ENCODE measurements at regions of chr3 and their contacts with region 1.

Region 1: GRCh38 chr3:149969940-149970715 is 567 bp downstream of the PFN2 start:
- DNase-seq: peak; percentile 72
- H3K4me3 ChIP-seq: peak overlapping the region; percentile 78
- H3K27ac ChIP-seq: peak overlapping the region; percentile 80
- H3K27me3 ChIP-seq: no peaks in the 10 kb centered on the region
- CTCF ChIP-seq: no peak

Region 2: DNA sequence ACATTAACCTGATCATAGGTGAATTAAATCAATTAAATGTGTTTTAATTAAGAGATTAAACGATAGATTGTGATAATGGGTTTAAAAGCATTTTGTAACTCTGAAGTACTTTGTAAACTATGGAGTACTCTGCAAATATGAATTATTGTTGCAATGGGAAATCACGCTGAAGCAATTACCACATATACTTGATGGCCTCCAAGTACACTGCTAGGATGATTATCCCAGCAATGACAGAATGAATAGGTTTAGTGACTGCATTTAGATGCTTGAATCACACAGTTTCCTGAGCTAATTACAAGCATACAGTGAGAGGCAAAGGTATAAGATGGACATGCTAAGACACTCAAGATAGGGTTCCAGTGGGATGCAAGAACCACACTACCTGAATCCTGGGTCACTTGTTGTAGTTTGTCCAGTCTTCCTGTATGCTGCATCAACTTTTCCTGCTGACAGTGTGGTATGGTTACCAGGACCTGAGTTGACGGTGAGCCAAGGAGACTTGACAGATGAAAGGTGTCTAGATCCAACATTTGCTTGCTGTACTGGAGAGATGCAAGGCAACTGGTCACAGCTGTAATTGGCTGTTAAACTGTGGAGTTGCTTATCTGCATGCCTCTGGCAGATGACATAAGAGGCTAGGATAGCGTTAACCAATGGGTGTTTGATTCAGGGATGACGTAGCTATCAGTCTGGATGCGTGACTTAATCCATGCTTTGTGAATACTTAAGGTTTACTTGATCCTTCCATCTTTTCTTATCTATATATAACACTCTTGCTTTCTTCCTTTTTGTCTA is 119.1 kb before region 1 on chr3:
- CTCF ChIA-PET with region 1: no interaction called
- POLR2A ChIA-PET with region 1: no interaction called
- DNase-seq: no peak
- H3K4me3 ChIP-seq: no peak overlapping the region
- H3K27ac ChIP-seq: no peak overlapping the region
- H3K27me3 ChIP-seq: no peaks in the 10 kb centered on the region
- CTCF ChIP-seq: no peak

Region 3: GRCh38 chr3:149902498-149903139 is 67.5 kb before region 1 on chr3:
- CTCF ChIA-PET with region 1: no interaction called
- POLR2A ChIA-PET with region 1: no interaction called
- DNase-seq: no peak
- H3K4me3 ChIP-seq: no peak overlapping the region
- H3K27ac ChIP-seq: no peak overlapping the region
- H3K27me3 ChIP-seq: no peaks in the 10 kb centered on the region
- CTCF ChIP-seq: peak; percentile 36

Region 4: DNA sequence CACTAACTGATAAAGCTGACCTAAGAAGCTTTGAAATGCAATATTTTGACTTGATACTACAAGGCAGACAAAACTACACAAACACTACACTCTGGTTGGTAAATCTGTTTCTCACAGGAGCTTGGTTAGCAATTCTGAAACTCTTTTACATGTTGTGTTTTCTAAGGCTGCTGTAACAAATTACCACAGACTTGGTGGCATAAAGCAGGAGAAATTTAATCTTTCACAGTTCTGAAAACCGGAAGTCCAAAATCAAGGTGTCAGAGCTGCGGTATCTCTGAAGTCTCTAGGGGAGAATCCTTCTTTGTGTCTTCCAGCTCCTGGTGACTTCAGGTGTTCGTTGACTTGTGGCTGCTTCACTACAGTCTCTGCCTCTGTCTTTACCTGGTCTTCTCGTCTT is 13.5 kb after region 1 on chr3:
- CTCF ChIA-PET with region 1: no interaction called
- POLR2A ChIA-PET with region 1: no interaction called
- DNase-seq: no peak
- H3K4me3 ChIP-seq: no peak overlapping the region
- H3K27ac ChIP-seq: no peak overlapping the region
- H3K27me3 ChIP-seq: no peaks in the 10 kb centered on the region
- CTCF ChIP-seq: no peak

Region 5: DNA sequence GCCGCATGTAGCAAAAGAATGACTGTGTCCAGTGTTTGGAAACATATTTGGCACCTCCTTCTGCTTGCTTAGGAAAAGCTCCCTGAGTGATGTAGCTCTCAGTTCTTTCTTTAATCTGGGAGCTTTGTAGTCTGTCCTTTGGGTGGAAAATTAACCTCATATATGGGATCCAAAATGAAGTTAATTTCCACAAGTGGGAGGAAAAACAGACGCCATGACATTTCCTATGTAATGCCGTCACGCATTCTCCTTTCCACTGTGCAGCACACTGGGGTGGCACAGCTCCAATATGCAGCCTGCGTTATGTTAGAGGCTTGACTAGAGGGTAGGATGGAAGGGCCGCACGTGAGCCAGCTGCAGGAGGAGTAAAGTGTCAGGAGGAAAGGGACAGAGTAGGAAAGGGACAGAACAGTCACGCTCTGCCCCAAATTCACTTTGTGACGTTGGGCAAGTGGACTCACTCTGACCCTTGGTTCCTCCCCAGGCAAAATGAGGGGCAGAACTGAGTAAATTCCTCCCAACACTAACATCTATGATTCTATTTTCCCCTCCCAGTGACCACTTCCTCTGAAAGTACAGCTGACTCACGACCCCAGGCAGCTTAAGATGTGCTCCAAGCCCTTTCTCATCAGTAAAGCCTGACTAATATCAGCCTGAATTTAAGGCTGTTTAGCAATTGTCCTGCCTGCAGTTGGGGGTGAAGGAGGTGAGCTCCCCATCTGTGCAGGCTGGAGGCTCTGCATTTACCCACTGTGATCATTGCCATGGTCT is 177.0 kb after region 1 on chr3:
- CTCF ChIA-PET with region 1: interaction called, 4 read pairs
- POLR2A ChIA-PET with region 1: interaction called, 17 read pairs
- DNase-seq: peak; percentile 85
- H3K4me3 ChIP-seq: peak overlapping the region; percentile 47
- H3K27ac ChIP-seq: peak overlapping the region; percentile 92
- H3K27me3 ChIP-seq: no peaks in the 10 kb centered on the region
- CTCF ChIP-seq: no peak

Region 6: GRCh38 chr3:150183678-150184425 is 213.7 kb after region 1 on chr3:
- CTCF ChIA-PET with region 1: interaction called, 96 read pairs
- POLR2A ChIA-PET with region 1: interaction called, 9 read pairs
- DNase-seq: peak; percentile 46
- H3K4me3 ChIP-seq: peak overlapping the region; percentile 57
- H3K27ac ChIP-seq: no peak overlapping the region
- H3K27me3 ChIP-seq: no peaks in the 10 kb centered on the region
- CTCF ChIP-seq: peak; percentile 81

Region 7: DNA sequence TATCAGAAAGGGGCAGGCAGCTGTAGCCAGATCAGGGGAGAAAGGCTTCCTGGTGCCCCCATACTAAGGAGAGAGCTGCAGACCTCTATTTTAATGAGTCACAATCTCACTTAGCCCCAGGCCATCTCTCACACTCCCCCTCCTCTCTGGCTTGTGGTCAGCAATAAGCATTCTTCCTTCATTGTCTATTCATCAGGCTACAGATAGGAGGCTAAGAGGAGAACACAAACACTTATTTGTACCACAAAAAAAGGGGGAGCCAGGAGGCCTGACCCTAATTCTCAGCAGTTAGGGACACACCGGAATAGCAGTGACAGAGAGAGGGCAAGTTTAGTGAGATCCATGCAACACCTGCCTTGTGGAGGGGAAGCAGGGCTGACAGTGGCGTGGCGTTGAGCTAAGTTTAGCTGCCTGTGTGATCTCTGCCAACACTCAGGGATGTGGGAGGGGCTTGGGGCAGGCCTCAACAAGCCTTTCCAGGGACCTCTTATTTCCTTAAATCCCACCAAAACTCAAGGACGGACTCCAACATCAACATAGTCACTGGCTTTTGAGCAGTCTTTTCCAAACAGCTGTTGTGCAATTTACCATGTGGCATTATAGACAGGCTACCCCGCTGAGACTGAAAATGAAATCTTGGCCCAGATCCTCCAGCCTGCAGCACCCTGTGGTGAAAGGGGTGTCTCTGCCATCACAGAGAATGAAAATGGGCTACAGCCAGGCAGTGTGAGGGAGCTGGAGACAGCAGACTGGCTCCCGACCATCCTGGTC is 246.1 kb after region 1 on chr3:
- CTCF ChIA-PET with region 1: interaction called, 49 read pairs
- POLR2A ChIA-PET with region 1: interaction called, 6 read pairs
- DNase-seq: no peak
- H3K4me3 ChIP-seq: no peak overlapping the region; the same call in 1 of the 2 replicates
- H3K27ac ChIP-seq: peak overlapping the region; percentile 54
- H3K27me3 ChIP-seq: peaks cover 4% of the 10 kb centered on the region
- CTCF ChIP-seq: peak; percentile 19; the same call in 1 of the 2 replicates

Region 8: GRCh38 chr3:150227839-150228238 is 257.7 kb after region 1 on chr3:
- CTCF ChIA-PET with region 1: interaction called, 25 read pairs
- POLR2A ChIA-PET with region 1: no interaction called
- DNase-seq: no peak
- H3K4me3 ChIP-seq: no peak overlapping the region
- H3K27ac ChIP-seq: no peak overlapping the region
- H3K27me3 ChIP-seq: no peaks in the 10 kb centered on the region
- CTCF ChIP-seq: peak; percentile 85

Measured in AG04450 (cell line).